ENCODE measurements at regions of chr11 and their contacts with region 1.

Region 1: DNA sequence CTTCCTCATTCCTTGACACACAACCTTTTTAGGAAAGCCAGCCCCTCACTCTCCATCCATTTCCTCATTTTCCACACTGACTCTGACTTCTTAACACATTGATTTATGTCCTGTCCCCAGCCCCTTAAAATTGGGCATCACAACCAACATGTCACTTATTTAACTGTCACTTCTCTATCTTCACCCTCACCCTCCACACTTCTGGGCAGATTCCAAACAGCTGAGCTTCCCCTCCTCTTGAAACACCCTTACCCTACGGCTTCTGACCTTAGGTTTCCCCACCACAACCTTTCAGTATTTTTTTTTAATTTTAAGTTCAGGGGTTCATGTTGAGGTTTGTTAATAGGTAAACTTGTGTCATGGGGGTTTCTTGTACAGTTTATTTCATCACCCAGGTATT is 696.3 kb downstream of the DLG2 start:
- DNase-seq: no peak

Region 2: GRCh38 chr11:84886344-84886743 is 44.5 kb before region 1 on chr11:
- intact Hi-C with region 1: loop called (anchors 1 kb)
- DNase-seq: no peak